ENCODE measurements at regions of chr10 and their contacts with region 1.

Region 1: GRCh38 chr10:119859420-119860258 is 13.0 kb downstream of the MCMBP start:
- DNase-seq: peak in 1 of 2 experiments; percentile 54
- H3K4me3 ChIP-seq: no peak overlapping the region
- H3K4me1 ChIP-seq: peaks cover 28% of the 10 kb centered on the region
- H3K27me3 ChIP-seq: no peaks in the 10 kb centered on the region

Region 2: GRCh38 chr10:119461380-119461779 is 398.3 kb before region 1 on chr10:
- in situ Hi-C with region 1: no loop called
- DNase-seq: no peak
- H3K4me3 ChIP-seq: no peak overlapping the region
- H3K4me1 ChIP-seq: no peaks in the 10 kb centered on the region
- H3K27me3 ChIP-seq: no peaks in the 10 kb centered on the region

Region 3: DNA sequence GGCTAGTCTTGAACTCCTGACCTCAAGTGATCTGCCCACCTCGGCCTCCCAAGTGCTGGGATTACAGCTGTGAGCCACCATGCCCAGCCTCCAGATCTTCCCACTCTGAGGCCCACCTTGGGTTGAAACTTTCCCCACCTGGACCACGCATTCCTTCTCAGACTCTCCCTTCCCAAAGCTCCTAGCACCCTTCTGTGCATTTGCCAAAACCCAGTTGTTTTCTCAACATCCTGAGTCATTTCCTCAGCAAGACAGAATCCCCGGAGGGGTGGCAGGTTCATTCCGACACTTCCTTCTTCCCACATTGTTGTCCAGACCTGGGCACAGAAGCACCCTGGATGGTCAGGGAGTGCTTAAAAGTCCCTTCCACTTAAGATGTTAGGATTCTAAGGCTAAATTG is 179.6 kb before region 1 on chr10:
- in situ Hi-C with region 1: loop called (anchors 5 kb)
- DNase-seq: no peak
- H3K4me3 ChIP-seq: no peak overlapping the region
- H3K4me1 ChIP-seq: no peaks in the 10 kb centered on the region
- H3K27me3 ChIP-seq: no peaks in the 10 kb centered on the region

Region 4: DNA sequence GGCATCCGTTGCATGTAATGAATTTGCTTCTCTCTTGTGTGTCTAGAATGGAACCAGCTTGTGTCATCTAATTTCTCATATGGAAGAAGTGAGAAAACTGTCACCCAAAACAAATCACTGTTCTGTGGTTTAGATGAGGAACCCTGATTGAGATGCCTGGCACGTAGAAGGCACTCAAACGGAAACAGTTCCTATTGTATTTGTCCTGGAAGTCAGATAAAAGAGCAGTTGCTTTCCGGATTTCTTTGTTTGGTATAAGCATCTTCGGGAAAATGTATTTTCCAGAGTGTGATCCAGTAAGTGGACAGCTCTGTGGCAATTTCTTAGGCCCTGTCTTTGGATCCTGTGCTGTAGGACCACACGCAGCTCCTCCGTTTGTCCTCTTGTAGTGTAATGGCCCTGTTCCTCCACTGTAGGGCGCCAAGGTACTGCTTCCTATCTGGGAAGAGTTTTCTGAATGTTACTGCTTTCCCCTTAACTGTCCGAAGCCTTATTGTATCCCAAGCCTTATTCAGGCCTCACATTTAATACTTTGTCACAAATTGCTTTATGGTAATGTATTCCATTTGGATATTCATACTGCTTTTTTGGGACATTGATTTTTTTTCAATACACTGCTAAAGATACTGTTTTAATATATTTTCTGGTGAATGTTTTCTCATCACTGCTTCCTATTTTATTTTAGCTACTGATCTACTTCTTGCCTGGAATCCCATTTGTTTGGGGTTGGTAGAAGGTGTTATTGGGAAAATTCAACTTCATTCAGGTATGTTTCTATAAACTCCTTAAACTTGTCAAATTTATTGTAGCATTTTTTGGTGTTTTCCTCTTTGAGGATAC is 109.0 kb before region 1 on chr10:
- in situ Hi-C with region 1: loop called (anchors 10 kb)
- DNase-seq: peak; percentile 70 to 77
- H3K4me3 ChIP-seq: no peak overlapping the region
- H3K4me1 ChIP-seq: no peaks in the 10 kb centered on the region
- H3K27me3 ChIP-seq: no peaks in the 10 kb centered on the region

Region 5: DNA sequence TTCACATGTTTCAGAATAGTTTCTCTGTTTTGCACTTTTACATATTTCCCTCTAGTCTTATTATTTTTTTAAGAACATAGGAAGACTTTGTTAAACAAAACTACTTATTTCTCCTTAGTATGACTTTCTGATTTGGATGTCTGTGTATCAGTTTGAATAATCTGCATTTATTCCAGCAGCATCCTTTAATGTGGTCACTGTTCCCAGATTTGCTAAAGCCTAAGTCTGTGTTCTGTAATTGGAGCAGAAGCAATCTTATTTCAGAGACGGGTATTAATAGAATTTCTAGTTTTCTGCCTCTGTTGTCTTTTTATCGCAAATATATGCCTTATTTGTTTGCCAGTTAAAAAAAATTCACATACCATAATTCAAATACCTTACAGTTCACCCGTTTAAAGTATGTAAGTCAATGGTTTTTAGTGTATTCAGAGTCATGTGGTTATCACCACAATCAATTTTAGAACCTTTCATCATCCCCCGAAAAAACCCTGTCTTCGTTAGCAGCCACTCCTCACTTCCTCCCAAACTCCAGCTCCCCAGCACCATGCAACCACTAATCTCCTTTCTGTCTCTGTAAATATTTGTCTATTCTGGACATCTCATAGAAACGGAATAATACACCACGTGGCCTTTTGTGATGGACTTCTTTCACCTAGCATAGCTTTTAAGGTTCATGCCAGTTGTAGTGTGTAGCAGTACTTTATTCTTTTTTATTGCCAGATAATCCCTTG is 75.1 kb before region 1 on chr10:
- in situ Hi-C with region 1: no loop called
- DNase-seq: peak; percentile 69 to 92
- H3K4me3 ChIP-seq: no peak overlapping the region
- H3K4me1 ChIP-seq: peaks cover 19% of the 10 kb centered on the region
- H3K27me3 ChIP-seq: no peaks in the 10 kb centered on the region